Breast epithelium (tissue), 4 donors: ENCODE measurements at regions of chr5 and their contacts with region 1.

Region 1: GRCh38 chr5:9324348-9325077 is 221.4 kb downstream of the SEMA5A start:
- DNase-seq: no peak
- H3K4me3 ChIP-seq: no peak overlapping the region
- H3K27ac ChIP-seq: no peak overlapping the region
- H3K4me1 ChIP-seq: no peaks in the 10 kb centered on the region
- H3K27me3 ChIP-seq: no peaks in the 10 kb centered on the region
- CTCF ChIP-seq: no peak
- POLR2A ChIP-seq: no peak

Region 2: GRCh38 chr5:8114597-8115266 is 1209.8 kb before region 1 on chr5:
- intact Hi-C with region 1: loop called (anchors 10 kb)
- DNase-seq: no peak
- H3K4me3 ChIP-seq: no peak overlapping the region
- H3K27ac ChIP-seq: no peak overlapping the region
- H3K4me1 ChIP-seq: no peaks in the 10 kb centered on the region
- H3K27me3 ChIP-seq: no peaks in the 10 kb centered on the region
- CTCF ChIP-seq: no peak
- POLR2A ChIP-seq: no peak

Region 3: DNA sequence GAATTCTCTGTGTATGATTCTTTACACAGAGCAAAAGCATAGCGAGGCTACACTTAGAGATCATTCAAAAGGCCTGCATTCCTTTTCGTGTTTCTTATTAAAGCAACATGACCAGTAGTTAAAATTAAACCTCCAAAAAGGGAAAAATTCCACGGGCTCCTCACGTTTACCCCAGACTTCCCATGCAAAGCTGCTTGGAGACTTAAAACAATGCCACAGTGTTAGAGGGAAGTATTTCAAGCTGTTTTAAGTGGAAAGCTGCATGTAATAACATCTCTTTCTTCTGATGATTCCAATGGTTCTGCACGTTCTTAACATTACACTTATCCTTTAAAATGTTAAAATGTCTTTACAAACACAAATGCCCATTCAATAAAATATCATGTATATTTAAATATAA is 183.8 kb before region 1 on chr5:
- intact Hi-C with region 1: no loop called
- DNase-seq: no peak
- H3K4me3 ChIP-seq: no peak overlapping the region
- H3K27ac ChIP-seq: no peak overlapping the region
- H3K4me1 ChIP-seq: no peaks in the 10 kb centered on the region
- H3K27me3 ChIP-seq: no peaks in the 10 kb centered on the region
- CTCF ChIP-seq: no peak
- POLR2A ChIP-seq: no peak

Region 4: DNA sequence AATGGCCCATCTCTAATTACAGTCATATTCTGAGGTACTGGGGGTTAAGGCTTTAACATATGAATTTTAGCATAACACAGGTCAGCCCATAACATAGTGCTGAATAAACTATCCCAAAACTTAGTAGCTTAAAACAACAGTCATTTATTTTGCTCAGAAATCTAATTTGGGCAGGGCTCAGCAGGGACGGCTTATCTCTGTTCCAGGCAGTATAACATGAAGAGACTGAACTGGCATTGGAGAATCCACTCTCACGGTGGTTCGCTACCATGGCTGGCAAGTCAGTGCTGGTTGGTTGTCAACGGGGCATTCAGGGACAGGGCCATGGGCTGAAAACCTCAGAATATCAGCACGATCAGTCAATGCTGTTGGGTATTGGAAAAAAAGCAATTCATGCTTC is 1957.3 kb after region 1 on chr5:
- intact Hi-C with region 1: no loop called
- DNase-seq: no peak
- H3K4me3 ChIP-seq: no peak overlapping the region
- H3K27ac ChIP-seq: no peak overlapping the region
- H3K4me1 ChIP-seq: no peaks in the 10 kb centered on the region
- H3K27me3 ChIP-seq: no peaks in the 10 kb centered on the region
- CTCF ChIP-seq: no peak
- POLR2A ChIP-seq: no peak